HepG2 (cell line): ENCODE measurements at regions of chr11 and their contacts with region 1.

Region 1: GRCh38 chr11:67606492-67607201 is at the start of gene NDUFV1:
- DNase-seq: peak; percentile 90
- ATAC-seq: peak; percentile 97
- H3K4me3 ChIP-seq: peak within 1 kb of the TSS; percentile 81 to 92 (median 88)
- H3K27ac ChIP-seq: peak within 1 kb of the TSS; percentile 37
- H3K4me1 ChIP-seq: peaks cover 21% of the 10 kb centered on the region
- H3K27me3 ChIP-seq: peaks cover 2 to 10% of the 10 kb centered on the region in 2 experiments; a peak in 2 of 5 replicates
- CTCF ChIP-seq: peak; percentile 96
- EP300 ChIP-seq: no peak
- POLR2A ChIP-seq: peak; percentile 59 to 74
- RAD21 ChIP-seq: peak; percentile 68
- total RNA-seq, gene NDUFV1: 137 and 140 TPM in 2 replicates

Region 2: DNA sequence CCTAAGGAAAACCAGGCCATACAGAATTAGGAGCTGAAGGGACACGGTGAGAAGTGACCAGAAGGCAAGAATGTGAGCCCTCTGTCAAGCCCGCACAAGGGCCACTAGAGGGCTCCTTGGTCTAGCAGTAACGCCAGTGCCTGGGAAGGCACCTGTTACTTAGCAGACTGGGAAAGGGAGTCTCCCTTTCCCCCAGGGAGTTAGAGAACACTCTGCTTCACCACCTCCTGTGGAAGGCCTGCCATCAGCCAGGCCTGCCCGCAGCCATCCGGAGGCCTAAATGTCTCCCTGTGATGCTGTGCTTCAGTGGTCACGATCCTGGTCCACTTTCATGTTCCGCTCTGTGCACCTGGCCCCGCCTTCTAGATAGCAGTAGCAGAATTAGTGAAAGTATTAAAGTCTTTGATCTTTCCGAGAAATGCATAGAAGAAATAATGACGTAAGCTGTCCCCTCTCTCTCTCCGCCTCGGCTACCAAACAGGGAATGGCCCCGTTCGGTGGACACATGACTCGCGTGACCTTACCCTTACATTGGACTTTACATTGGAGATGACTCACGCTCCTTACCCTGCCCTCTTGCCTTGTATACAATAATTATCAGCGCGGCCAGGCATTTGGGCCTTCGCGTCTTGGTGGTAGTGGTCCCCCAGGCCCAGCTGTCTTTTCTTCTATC is 33.8 kb before region 1 on chr11:
- CTCF ChIA-PET with region 1: interaction called, 20 read pairs
- POLR2A ChIA-PET with region 1: no interaction called
- in situ Hi-C with region 1: no loop called
- intact Hi-C with region 1: loop called (anchors 1 kb)
- DNase-seq: peak; percentile 69
- ATAC-seq: peak; percentile 77
- H3K4me3 ChIP-seq: peak overlapping the region in 1 of 3 experiments; percentile 59; a peak in 3 of 6 replicates
- H3K27ac ChIP-seq: no peak overlapping the region
- H3K4me1 ChIP-seq: peaks cover 10% of the 10 kb centered on the region
- H3K27me3 ChIP-seq: peaks cover 0 to 2% of the 10 kb centered on the region in 2 experiments; a peak in 1 of 5 replicates
- CTCF ChIP-seq: peak; percentile 92
- EP300 ChIP-seq: no peak
- POLR2A ChIP-seq: no peak
- RAD21 ChIP-seq: peak; percentile 88

Region 3: DNA sequence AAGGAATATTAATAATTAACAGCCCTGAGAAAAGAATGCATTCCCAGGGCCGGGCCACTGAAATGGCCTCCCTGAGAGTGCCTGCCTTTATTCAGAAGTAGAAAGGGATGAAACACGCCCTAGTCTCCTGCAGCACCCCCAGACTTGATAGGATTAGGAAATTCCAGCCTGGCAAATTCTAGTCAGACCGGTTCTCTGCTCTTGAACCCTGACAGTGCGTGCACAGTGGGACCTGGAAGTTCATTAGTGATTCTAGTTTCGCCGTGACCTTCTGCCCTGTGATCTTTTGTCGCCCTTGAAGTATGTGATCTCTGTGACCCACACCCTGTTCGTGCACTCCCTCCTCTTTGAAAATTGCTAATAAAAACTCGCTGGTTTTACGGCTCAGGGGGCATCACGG is 25.2 kb before region 1 on chr11:
- CTCF ChIA-PET with region 1: no interaction called
- POLR2A ChIA-PET with region 1: interaction called, 3 read pairs
- in situ Hi-C with region 1: no loop called
- intact Hi-C with region 1: loop called (anchors 1 kb)
- DNase-seq: peak; percentile 49
- ATAC-seq: peak; percentile 54
- H3K4me3 ChIP-seq: peak overlapping the region; percentile 18 to 41 (median 31); a peak in 5 of 6 replicates
- H3K27ac ChIP-seq: no peak overlapping the region
- H3K4me1 ChIP-seq: peaks cover 46% of the 10 kb centered on the region
- H3K27me3 ChIP-seq: peaks cover 2 to 5% of the 10 kb centered on the region in 2 experiments; a peak in 2 of 5 replicates
- CTCF ChIP-seq: no peak
- EP300 ChIP-seq: no peak; a peak in 1 of 4 replicates
- POLR2A ChIP-seq: no peak
- RAD21 ChIP-seq: no peak